BJ (cell line): ENCODE measurements at regions of chr5 and their contacts with region 1.

Region 1: GRCh38 chr5:36230151-36230793 is 11.5 kb downstream of the NADK2 start:
- DNase-seq: no peak
- H3K4me3 ChIP-seq: no peak overlapping the region
- H3K27me3 ChIP-seq: no peaks in the 10 kb centered on the region
- CTCF ChIP-seq: no peak

Region 2: GRCh38 chr5:36241631-36242533 is 11.6 kb after region 1 on chr5 and contains the start of gene NADK2:
- CTCF ChIA-PET with region 1: interaction called, 12 read pairs
- POLR2A ChIA-PET with region 1: interaction called, 4 read pairs
- DNase-seq: peak; percentile 81
- H3K4me3 ChIP-seq: peak within 1 kb of the TSS; percentile 69
- H3K27me3 ChIP-seq: no peaks in the 10 kb centered on the region
- CTCF ChIP-seq: peak; percentile 68
- polyA plus RNA-seq, gene NADK2: 7.2 and 13.5 TPM in 2 replicates

Region 3: GRCh38 chr5:36337597-36337996 is 107.3 kb after region 1 on chr5:
- CTCF ChIA-PET with region 1: no interaction called
- POLR2A ChIA-PET with region 1: no interaction called
- DNase-seq: no peak
- H3K4me3 ChIP-seq: no peak overlapping the region
- H3K27me3 ChIP-seq: peaks cover 4% of the 10 kb centered on the region
- CTCF ChIP-seq: no peak